Dorsolateral prefrontal cortex (tissue), 120 donors: ENCODE measurements at regions of chr3 and their contacts with region 1.

Region 1: DNA sequence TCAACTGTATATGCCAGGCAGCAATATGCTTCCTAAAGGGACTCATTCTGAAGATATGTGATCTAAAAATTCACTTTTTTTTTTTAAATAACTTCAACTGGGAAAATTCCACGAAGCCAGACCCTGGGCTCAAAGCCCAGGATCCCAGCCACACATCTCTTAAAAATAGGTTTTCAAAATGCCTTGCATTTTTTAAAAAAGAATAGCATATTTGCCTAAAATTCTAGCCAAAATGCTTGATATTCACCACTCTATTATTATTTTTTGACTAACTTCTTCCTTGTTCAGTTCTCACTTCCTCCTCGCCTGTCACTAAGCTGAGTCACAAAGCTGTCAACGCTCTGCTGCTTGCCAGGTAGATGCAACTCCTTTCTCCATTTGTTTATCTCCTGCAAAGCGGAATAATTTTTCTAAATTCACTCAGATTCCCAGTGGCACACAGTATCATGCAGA is 28.0 kb upstream of the VGLL4 start:
- DNase-seq: peak in 5 of 10 donors; percentile 22 to 55 (median 41)
- H3K4me3 ChIP-seq: no peak overlapping the region
- H3K27ac ChIP-seq: peak overlapping the region in 23 of 59 donors; percentile 1 to 69 (median 40)
- H3K27me3 ChIP-seq: no peaks in the 10 kb centered on the region
- CTCF ChIP-seq: no peak

Region 2: GRCh38 chr3:11711876-11712275 is 40.2 kb after region 1 on chr3:
- intact Hi-C with region 1: loop called in 1 of 2 experiments (anchors 5 kb)
- DNase-seq: peak in 5 of 10 donors; percentile 11 to 60 (median 44)
- H3K4me3 ChIP-seq: no peak overlapping the region
- H3K27ac ChIP-seq: peak overlapping the region in 4 of 59 donors; percentile 25 to 52 (median 30)
- H3K27me3 ChIP-seq: no peaks in the 10 kb centered on the region
- CTCF ChIP-seq: no peak